Mammary epithelial cell (primary cell): ENCODE measurements at regions of chr7 and their contacts with region 1.

Region 1: GRCh38 chr7:142088022-142088714 is 23.4 kb upstream of the MGAM2 start:
- DNase-seq: no peak
- H3K4me3 ChIP-seq: no peak overlapping the region
- H3K27ac ChIP-seq: no peak overlapping the region
- H3K4me1 ChIP-seq: no peaks in the 10 kb centered on the region
- H3K27me3 ChIP-seq: no peaks in the 10 kb centered on the region
- CTCF ChIP-seq: no peak

Region 2: GRCh38 chr7:142024547-142024946 is 63.6 kb before region 1 on chr7:
- CTCF ChIA-PET with region 1: no interaction called
- dilution Hi-C with region 1: no loop called
- in situ Hi-C with region 1: no loop called
- intact Hi-C with region 1: no loop called
- DNase-seq: peak; percentile 92
- H3K4me3 ChIP-seq: no peak overlapping the region
- H3K27ac ChIP-seq: peak overlapping the region; percentile 92
- H3K4me1 ChIP-seq: peaks cover 44% of the 10 kb centered on the region
- H3K27me3 ChIP-seq: no peaks in the 10 kb centered on the region
- CTCF ChIP-seq: peak; percentile 17 to 46

Region 3: DNA sequence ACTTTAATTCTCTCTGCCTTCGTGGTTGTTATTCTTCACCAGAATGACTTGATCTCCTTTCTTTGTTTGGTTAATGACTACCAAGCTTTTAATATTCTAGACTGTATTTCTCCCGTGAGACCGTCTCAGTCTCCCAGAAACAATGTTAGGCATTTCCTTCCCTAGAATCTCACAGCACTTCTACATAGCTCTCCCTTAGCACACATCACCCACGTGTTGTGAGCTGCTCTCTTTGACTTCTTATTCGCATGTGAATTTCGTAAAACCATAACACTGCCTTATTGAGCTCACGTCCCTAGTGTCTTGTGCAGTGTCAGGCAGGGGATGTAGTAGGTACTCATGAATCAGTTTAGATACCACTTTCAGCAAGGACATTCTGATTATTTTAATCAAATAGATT is 34.2 kb before region 1 on chr7:
- CTCF ChIA-PET with region 1: no interaction called
- dilution Hi-C with region 1: loop called (anchors 5 kb)
- in situ Hi-C with region 1: no loop called
- intact Hi-C with region 1: no loop called
- DNase-seq: no peak
- H3K4me3 ChIP-seq: no peak overlapping the region
- H3K27ac ChIP-seq: no peak overlapping the region
- H3K4me1 ChIP-seq: no peaks in the 10 kb centered on the region
- H3K27me3 ChIP-seq: no peaks in the 10 kb centered on the region
- CTCF ChIP-seq: no peak

Region 4: GRCh38 chr7:142168745-142169144 is 80.6 kb after region 1 on chr7:
- CTCF ChIA-PET with region 1: no interaction called
- dilution Hi-C with region 1: no loop called
- in situ Hi-C with region 1: no loop called
- intact Hi-C with region 1: no loop called
- DNase-seq: peak; percentile 18
- H3K4me3 ChIP-seq: no peak overlapping the region
- H3K27ac ChIP-seq: no peak overlapping the region
- H3K4me1 ChIP-seq: no peaks in the 10 kb centered on the region
- H3K27me3 ChIP-seq: no peaks in the 10 kb centered on the region
- CTCF ChIP-seq: no peak